ENCODE measurements at regions of chr20 and their contacts with region 1.

Region 1: DNA sequence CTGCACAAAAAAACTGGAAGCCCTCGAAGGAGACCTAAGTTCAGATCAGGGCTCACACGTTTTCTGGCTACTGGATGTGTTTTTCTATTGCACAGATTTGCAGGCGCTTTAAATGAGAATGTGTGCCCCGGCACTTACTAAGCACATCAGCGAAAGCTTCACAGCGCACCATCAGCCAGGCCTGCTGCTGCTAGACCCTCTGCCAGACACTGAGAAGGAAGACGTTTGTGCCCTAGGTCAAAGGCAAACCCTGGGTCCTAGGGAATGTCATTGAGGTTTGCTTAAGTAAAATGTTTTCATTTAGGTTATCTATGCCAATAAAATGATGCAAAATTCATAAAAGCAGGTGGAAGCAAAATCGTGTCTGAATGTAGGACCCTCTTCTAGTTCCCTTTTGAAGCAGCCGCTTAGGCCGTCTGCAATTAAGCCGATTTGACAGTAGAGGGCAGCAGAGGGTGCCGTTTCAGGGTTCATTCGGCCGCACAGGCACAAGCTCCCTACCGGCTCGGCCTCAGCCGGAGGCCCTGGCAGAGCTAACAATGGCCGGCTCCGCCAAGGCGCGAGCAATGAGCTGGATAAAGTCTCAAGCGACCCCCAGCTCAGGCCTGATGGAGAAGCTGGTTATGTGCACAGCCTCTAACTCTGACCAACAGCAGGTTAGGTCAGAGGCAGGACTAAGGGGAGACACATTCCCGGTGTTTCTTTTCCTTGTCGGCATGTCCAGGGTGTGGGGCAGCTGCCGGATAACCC is 107.2 kb upstream of the FOXA2 start:
- DNase-seq: peak; percentile 51
- ATAC-seq: peak; percentile 96
- H3K4me3 ChIP-seq: peak overlapping the region in 1 of 2 experiments; percentile 29; a peak in 1 of 4 replicates
- H3K27ac ChIP-seq: no peak overlapping the region
- H3K4me1 ChIP-seq: peaks cover 2 to 7% of the 10 kb centered on the region in 2 experiments; a peak in 3 of 4 replicates
- H3K27me3 ChIP-seq: no peaks in the 10 kb centered on the region
- CTCF ChIP-seq: peak; percentile 74 to 82 (median 77)
- POLR2A ChIP-seq: no peak
- RAD21 ChIP-seq: peak; percentile 88

Region 2: DNA sequence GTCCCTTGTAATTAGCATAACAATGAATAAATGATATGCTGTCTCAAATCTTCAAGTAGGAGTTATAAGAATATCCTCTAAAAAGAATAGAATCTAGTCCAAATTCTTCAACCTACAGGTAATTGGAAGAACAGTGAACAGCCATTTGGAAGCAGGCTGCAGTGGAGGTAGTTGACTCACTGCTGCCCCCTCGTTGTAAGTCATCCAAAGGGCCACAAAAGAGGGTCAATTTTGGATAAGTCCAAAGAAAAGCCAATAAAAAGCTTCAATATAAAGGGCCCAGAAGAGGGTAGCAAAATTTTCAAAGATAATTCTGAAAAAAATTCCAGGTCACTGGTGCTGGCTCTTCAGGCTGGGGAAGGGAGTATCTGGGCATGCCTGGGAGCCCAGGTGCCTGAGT is 282.8 kb after region 1 on chr20:
- CTCF ChIA-PET with region 1: interaction called, 31 read pairs
- POLR2A ChIA-PET with region 1: no interaction called
- RAD21 ChIA-PET with region 1: interaction called, 3 to 7 read pairs
- intact Hi-C with region 1: loop called (anchors 2 kb)
- DNase-seq: peak; percentile 18
- ATAC-seq: peak; percentile 78
- H3K4me3 ChIP-seq: no peak overlapping the region
- H3K27ac ChIP-seq: no peak overlapping the region
- H3K4me1 ChIP-seq: no peaks in the 10 kb centered on the region
- H3K27me3 ChIP-seq: peaks cover 50% of the 10 kb centered on the region
- CTCF ChIP-seq: peak; percentile 38 to 69 (median 66); a peak in 5 of 6 replicates
- POLR2A ChIP-seq: no peak
- RAD21 ChIP-seq: peak; percentile 47

Region 3: GRCh38 chr20:23061734-23062561 is 370.4 kb after region 1 on chr20:
- CTCF ChIA-PET with region 1: interaction called, 6 read pairs
- POLR2A ChIA-PET with region 1: no interaction called
- RAD21 ChIA-PET with region 1: no interaction called
- intact Hi-C with region 1: loop called (anchors 5 kb)
- DNase-seq: no peak
- ATAC-seq: peak; percentile 81
- H3K4me3 ChIP-seq: no peak overlapping the region
- H3K27ac ChIP-seq: no peak overlapping the region
- H3K4me1 ChIP-seq: no peaks in the 10 kb centered on the region; a peak in 1 of 4 replicates
- H3K27me3 ChIP-seq: no peaks in the 10 kb centered on the region
- CTCF ChIP-seq: peak; percentile 11 to 55 (median 54); a peak in 5 of 6 replicates
- POLR2A ChIP-seq: no peak
- RAD21 ChIP-seq: peak; percentile 41; the same call in 1 of the 2 replicates

Region 4: DNA sequence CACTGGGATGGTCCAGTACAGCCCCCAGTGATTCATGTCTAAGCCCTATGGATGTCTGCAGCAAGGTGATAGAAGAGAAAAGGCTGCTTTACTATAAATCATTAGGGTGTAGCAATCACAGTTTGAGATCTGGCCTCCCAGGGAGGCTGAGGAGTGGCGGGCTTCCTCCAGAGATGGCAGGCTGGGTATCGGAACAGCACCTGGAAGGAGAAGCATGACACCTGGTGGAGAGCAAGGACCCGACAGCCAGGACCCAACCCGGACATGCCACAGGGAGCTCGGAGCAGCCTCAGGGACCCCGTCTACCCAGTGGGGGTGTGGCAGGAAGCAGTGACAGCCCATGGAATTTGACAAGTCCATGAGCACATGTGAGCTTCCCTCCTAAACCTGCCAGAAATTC is 509.4 kb after region 1 on chr20:
- CTCF ChIA-PET with region 1: interaction called, 68 read pairs
- POLR2A ChIA-PET with region 1: no interaction called
- RAD21 ChIA-PET with region 1: interaction called, 8 to 12 read pairs
- intact Hi-C with region 1: loop called (anchors 1 kb)
- DNase-seq: peak; percentile 48
- ATAC-seq: peak; percentile 99
- H3K4me3 ChIP-seq: no peak overlapping the region
- H3K27ac ChIP-seq: no peak overlapping the region
- H3K4me1 ChIP-seq: no peaks in the 10 kb centered on the region
- H3K27me3 ChIP-seq: peaks cover 33% of the 10 kb centered on the region
- CTCF ChIP-seq: peak; percentile 72 to 83 (median 81)
- POLR2A ChIP-seq: no peak
- RAD21 ChIP-seq: peak; percentile 91

Region 5: GRCh38 chr20:23245553-23246181 is 554.1 kb after region 1 on chr20:
- CTCF ChIA-PET with region 1: interaction called, 18 read pairs
- POLR2A ChIA-PET with region 1: no interaction called
- RAD21 ChIA-PET with region 1: no interaction called
- intact Hi-C with region 1: no loop called
- DNase-seq: no peak
- ATAC-seq: peak; percentile 95
- H3K4me3 ChIP-seq: no peak overlapping the region
- H3K27ac ChIP-seq: no peak overlapping the region
- H3K4me1 ChIP-seq: no peaks in the 10 kb centered on the region
- H3K27me3 ChIP-seq: peaks cover 29% of the 10 kb centered on the region
- CTCF ChIP-seq: peak; percentile 19 to 71 (median 65); a peak in 4 of 6 replicates
- POLR2A ChIP-seq: no peak
- RAD21 ChIP-seq: peak; percentile 37

Region 6: GRCh38 chr20:23340524-23340923 is 649.0 kb after region 1 on chr20:
- CTCF ChIA-PET with region 1: interaction called, 70 read pairs
- POLR2A ChIA-PET with region 1: interaction called, 6 read pairs
- RAD21 ChIA-PET with region 1: interaction called, 6 to 9 read pairs
- intact Hi-C with region 1: loop called (anchors 1 kb)
- DNase-seq: peak; percentile 54
- ATAC-seq: peak; percentile 92
- H3K4me3 ChIP-seq: no peak overlapping the region
- H3K27ac ChIP-seq: no peak overlapping the region
- H3K4me1 ChIP-seq: no peaks in the 10 kb centered on the region
- H3K27me3 ChIP-seq: peaks cover 18% of the 10 kb centered on the region; the same call in 1 of the 2 replicates
- CTCF ChIP-seq: peak; percentile 40 to 53 (median 50); a peak in 5 of 6 replicates
- POLR2A ChIP-seq: no peak
- RAD21 ChIP-seq: peak; percentile 76